ENCODE measurements at regions of chrX and their contacts with region 1.

Region 1: GRCh38 chrX:24190500-24191156 is 41.1 kb downstream of the ZFX start:
- DNase-seq: peak; percentile 87
- ATAC-seq: peak; percentile 67
- H3K4me3 ChIP-seq: peak overlapping the region; percentile 46 to 73 (median 68)
- H3K27ac ChIP-seq: peak overlapping the region; percentile 93
- H3K4me1 ChIP-seq: peaks cover 62% of the 10 kb centered on the region
- H3K27me3 ChIP-seq: no peaks in the 10 kb centered on the region
- CTCF ChIP-seq: no peak
- EP300 ChIP-seq: peak in 1 of 2 experiments; percentile 89; a peak in 2 of 4 replicates
- POLR2A ChIP-seq: peak; percentile 73 to 74
- RAD21 ChIP-seq: no peak

Region 2: DNA sequence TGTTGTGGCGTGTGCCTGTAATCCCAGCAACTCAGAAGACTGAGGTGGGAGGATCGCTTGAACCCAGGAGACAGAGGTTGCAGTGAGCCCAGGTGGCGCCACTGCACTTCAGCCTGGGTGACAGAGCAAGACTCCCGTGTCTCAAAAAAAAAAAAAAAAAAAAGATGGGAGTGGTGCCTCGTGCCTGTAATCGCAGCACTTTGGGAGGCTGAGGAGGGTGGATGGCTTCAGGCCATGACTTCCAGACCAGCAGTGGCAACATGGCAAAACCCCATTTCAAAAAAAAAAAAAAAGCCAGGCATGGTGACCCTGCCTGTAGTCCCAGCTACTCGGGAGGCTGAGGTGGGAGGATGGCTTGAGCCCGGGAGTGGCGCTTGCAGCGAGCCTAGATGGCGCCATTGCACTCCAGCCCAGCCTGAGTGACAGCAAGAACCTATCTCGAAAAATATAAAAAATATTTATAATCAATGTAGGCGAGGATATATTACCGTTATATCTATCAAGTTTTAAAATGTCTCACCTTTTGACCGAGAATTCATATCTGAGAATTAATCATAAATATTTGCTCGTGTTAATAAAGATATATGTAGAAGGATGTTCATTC is 108.9 kb before region 1 on chrX:
- CTCF ChIA-PET with region 1: no interaction called
- POLR2A ChIA-PET with region 1: no interaction called
- in situ Hi-C with region 1: no loop called
- intact Hi-C with region 1: loop called (anchors 5 kb)
- DNase-seq: peak; percentile 44
- ATAC-seq: peak; percentile 87
- H3K4me3 ChIP-seq: no peak overlapping the region
- H3K27ac ChIP-seq: no peak overlapping the region
- H3K4me1 ChIP-seq: no peaks in the 10 kb centered on the region
- H3K27me3 ChIP-seq: no peaks in the 10 kb centered on the region
- CTCF ChIP-seq: peak; percentile 62
- EP300 ChIP-seq: no peak
- POLR2A ChIP-seq: no peak
- RAD21 ChIP-seq: no peak

Region 3: DNA sequence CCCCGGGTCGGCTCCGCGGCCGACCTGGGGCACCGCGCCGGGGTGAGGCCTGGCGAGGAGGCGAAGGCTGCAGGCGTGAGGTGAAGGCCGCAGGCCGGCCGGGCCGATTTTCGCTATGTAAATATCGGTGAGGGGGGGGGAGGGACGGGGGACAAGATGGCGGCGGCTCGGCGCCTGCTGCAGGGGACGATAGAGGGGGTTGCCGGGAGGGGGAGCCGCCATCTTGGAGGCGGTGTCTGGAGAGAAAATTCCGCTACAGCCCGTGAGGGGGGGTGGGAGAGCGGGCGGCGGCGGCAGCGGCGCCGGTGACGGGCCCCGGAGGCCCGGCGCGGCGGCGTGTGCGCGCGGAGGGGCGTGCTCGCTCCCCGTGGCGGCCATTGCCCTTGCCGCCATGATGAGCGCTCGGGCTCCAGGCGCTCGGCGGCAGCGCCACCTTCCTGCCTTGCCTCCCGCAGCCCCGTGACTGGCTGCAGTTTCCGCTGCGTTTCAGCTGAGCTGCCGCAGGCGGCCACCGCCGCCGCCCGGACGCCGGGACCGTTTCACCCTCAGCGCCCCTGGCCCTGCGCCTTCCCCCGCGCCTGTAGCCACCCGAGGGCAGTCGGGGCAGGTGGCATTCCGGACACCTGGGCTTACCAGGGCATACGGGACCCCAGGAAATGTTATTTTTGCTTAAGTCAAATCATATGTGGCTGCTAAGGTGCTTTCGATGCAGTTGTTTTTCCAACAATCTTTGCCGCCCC is 40.4 kb before region 1 on chrX:
- CTCF ChIA-PET with region 1: no interaction called
- POLR2A ChIA-PET with region 1: interaction called, 12 read pairs
- in situ Hi-C with region 1: no loop called
- intact Hi-C with region 1: loop called (anchors 1 kb)
- DNase-seq: peak; percentile 67
- ATAC-seq: peak; percentile 84
- H3K4me3 ChIP-seq: peak overlapping the region; percentile 74 to 79 (median 74)
- H3K27ac ChIP-seq: peak overlapping the region; percentile 95
- H3K4me1 ChIP-seq: peaks cover 61% of the 10 kb centered on the region
- H3K27me3 ChIP-seq: no peaks in the 10 kb centered on the region
- CTCF ChIP-seq: peak; percentile 66
- EP300 ChIP-seq: no peak
- POLR2A ChIP-seq: peak in 1 of 2 experiments; percentile 58; a peak in 3 of 4 replicates
- RAD21 ChIP-seq: peak; percentile 71

Region 4: GRCh38 chrX:24241822-24242648 is 51.4 kb after region 1 on chrX:
- CTCF ChIA-PET with region 1: no interaction called
- POLR2A ChIA-PET with region 1: interaction called, 4 read pairs
- in situ Hi-C with region 1: no loop called
- intact Hi-C with region 1: loop called (anchors 10 kb)
- DNase-seq: peak; percentile 31
- ATAC-seq: peak; percentile 78
- H3K4me3 ChIP-seq: peak overlapping the region in 1 of 3 experiments; percentile 41; a peak in 1 of 6 replicates
- H3K27ac ChIP-seq: no peak overlapping the region
- H3K4me1 ChIP-seq: peaks cover 38% of the 10 kb centered on the region
- H3K27me3 ChIP-seq: no peaks in the 10 kb centered on the region
- CTCF ChIP-seq: peak; percentile 56
- EP300 ChIP-seq: no peak
- POLR2A ChIP-seq: no peak
- RAD21 ChIP-seq: no peak

Region 5: DNA sequence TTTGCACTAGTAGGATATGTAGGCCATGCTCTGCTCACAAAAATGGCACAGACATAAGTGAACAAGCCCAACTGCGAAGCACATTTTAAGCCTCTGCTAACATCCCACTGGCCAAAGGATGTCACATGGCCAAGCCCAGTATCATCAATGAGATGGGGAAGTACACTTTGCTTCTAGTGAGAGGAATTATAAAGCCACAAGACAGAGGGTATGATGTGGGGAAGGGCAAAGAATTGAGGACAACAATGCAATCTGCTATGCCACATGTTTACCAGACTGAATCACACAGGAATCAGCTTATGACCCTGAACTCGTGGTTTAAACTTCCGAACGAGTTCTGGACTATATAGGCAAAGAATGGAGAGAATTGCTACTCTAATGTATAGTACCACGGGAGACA is 208.9 kb after region 1 on chrX:
- CTCF ChIA-PET with region 1: no interaction called
- POLR2A ChIA-PET with region 1: no interaction called
- in situ Hi-C with region 1: no loop called
- intact Hi-C with region 1: no loop called
- DNase-seq: no peak
- ATAC-seq: no peak
- H3K4me3 ChIP-seq: no peak overlapping the region
- H3K27ac ChIP-seq: no peak overlapping the region
- H3K4me1 ChIP-seq: no peaks in the 10 kb centered on the region
- H3K27me3 ChIP-seq: no peaks in the 10 kb centered on the region
- CTCF ChIP-seq: no peak
- EP300 ChIP-seq: no peak
- POLR2A ChIP-seq: no peak
- RAD21 ChIP-seq: no peak